ENCODE measurements at regions of chr1 and their contacts with region 1.

Region 1: DNA sequence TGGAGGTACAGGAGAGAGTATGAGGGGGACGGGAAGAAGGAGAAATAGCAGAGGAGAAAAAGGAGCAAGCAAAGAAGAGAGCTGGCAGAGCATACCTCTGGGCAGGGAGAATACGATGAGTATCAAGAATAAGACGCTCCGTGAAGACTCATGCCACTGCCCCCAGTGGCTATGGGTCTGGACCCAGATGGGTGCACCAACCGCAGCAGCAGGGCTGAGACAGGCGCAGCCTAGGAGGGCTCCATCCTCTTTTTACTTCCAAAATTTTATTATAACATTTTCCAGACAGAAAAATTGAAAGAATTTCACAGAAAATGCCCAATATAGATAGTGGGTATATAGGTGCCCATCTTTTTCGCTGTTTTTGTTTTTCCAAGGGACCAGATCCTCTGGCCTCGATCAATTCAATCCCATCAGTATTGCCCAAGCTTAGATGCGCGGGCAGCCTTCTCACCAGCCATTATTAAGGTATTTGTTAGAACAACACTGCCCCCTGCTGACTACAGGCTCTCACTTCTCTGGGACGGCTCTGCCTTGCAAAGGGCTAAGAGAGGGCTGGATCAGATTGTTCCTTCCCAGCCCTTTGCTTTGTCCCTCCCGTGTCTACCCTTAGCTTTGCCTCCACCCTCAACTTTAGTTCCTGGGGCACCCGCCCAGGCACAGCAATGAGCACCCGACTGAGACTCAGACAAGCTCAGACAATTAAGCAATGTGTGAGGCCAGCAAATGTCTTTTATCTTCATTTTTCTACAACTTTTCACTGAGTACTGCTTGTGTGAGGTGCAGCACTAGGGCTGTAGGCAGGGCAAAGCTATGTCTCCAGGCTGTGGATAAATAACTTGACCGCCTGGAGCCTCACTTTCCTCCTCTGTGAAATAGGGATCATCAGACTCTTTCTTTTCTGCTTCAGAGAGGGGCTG is 17.5 kb upstream of the CAMK1G start:
- DNase-seq: peak; percentile 77
- H3K4me3 ChIP-seq: no peak overlapping the region
- H3K27ac ChIP-seq: peak overlapping the region; percentile 18
- H3K4me1 ChIP-seq: peaks cover 38% of the 10 kb centered on the region
- H3K27me3 ChIP-seq: no peaks in the 10 kb centered on the region
- CTCF ChIP-seq: peak; percentile 78 to 87

Region 2: DNA sequence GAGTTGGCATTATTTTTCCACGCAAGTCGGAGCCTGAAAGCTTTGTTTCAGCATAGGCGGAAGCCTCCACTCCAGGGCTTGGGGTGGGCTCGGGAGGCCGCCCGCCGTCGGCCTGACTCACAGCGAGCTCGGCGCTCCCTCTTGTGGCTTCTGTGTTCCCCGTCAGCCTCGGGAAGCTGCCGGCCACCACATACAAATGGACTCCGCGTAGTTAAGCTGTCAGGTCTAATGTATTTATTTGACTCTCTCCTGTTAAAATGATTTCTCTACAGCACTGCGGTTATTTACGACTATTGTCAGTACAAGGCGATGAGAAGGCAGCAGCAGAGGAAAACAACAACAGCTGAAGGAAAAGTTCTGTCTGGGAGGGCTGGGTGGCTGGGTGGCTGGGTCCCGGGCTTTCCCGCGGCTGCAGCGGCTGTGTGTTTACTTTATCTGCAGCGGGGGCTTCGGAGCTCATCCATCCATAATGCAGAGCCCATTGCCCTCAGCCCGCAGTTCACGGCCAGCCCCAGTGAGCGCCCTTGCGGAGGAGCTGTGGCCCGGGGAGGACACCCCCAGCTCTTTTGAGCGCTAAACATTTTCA is 358.2 kb before region 1 on chr1:
- CTCF ChIA-PET with region 1: no interaction called
- dilution Hi-C with region 1: no loop called
- in situ Hi-C with region 1: no loop called
- intact Hi-C with region 1: loop called (anchors 2 kb)
- DNase-seq: peak; percentile 44
- H3K4me3 ChIP-seq: peak overlapping the region; percentile 28 to 46 (median 36)
- H3K27ac ChIP-seq: no peak overlapping the region
- H3K4me1 ChIP-seq: peaks cover 12% of the 10 kb centered on the region
- H3K27me3 ChIP-seq: no peaks in the 10 kb centered on the region
- CTCF ChIP-seq: peak; percentile 59 to 92

Region 3: GRCh38 chr1:209389258-209389657 is 176.8 kb before region 1 on chr1:
- CTCF ChIA-PET with region 1: no interaction called
- dilution Hi-C with region 1: no loop called
- in situ Hi-C with region 1: no loop called
- intact Hi-C with region 1: loop called (anchors 2 kb)
- DNase-seq: peak; percentile 98
- H3K4me3 ChIP-seq: no peak overlapping the region
- H3K27ac ChIP-seq: peak overlapping the region; percentile 98
- H3K4me1 ChIP-seq: peaks cover 64% of the 10 kb centered on the region
- H3K27me3 ChIP-seq: no peaks in the 10 kb centered on the region
- CTCF ChIP-seq: no peak

Region 4: DNA sequence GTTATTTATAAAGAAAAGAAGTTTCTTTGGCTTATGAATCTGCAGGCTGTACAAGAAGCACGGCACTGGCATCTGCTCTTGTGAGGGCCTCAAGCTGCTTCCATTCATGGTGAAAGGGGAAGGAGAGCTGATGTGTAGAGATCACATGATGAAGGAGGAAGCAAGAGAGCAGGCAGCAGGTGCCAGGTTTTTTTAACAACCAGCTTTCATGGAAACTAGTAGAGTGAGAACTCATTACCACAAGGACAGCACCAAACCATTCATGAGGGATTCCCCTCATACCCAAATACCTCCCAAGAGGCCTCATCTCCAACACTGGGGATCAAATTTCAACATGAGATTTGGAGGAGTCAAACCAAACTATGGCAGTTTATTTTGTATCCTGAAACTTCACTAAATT is 68.3 kb before region 1 on chr1:
- CTCF ChIA-PET with region 1: no interaction called
- dilution Hi-C with region 1: no loop called
- in situ Hi-C with region 1: no loop called
- intact Hi-C with region 1: no loop called
- DNase-seq: peak; percentile 25
- H3K4me3 ChIP-seq: no peak overlapping the region
- H3K27ac ChIP-seq: no peak overlapping the region
- H3K4me1 ChIP-seq: no peaks in the 10 kb centered on the region
- H3K27me3 ChIP-seq: no peaks in the 10 kb centered on the region
- CTCF ChIP-seq: no peak

Region 5: DNA sequence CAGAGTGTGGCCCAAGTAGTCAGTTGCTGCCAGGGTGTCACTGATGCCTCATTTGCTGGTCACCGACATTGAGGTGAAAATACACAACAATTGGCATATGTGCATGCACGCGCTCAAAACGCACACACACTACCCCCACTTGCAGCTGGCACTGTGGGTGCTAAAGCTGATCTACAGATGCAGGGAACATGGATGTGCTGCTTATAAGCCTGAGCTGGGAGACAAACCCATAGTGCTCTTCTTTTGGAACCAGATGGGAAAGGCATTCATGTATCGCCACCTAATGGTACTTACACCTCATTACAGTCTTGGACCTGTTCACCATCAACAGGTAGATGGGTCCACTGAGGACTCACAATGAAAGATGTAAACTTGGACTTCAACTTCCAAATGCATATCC is 52.8 kb before region 1 on chr1:
- CTCF ChIA-PET with region 1: no interaction called
- dilution Hi-C with region 1: no loop called
- in situ Hi-C with region 1: no loop called
- intact Hi-C with region 1: loop called (anchors 2 kb)
- DNase-seq: peak; percentile 55
- H3K4me3 ChIP-seq: no peak overlapping the region
- H3K27ac ChIP-seq: no peak overlapping the region
- H3K4me1 ChIP-seq: no peaks in the 10 kb centered on the region
- H3K27me3 ChIP-seq: no peaks in the 10 kb centered on the region
- CTCF ChIP-seq: peak; percentile 80 to 85

Region 6: DNA sequence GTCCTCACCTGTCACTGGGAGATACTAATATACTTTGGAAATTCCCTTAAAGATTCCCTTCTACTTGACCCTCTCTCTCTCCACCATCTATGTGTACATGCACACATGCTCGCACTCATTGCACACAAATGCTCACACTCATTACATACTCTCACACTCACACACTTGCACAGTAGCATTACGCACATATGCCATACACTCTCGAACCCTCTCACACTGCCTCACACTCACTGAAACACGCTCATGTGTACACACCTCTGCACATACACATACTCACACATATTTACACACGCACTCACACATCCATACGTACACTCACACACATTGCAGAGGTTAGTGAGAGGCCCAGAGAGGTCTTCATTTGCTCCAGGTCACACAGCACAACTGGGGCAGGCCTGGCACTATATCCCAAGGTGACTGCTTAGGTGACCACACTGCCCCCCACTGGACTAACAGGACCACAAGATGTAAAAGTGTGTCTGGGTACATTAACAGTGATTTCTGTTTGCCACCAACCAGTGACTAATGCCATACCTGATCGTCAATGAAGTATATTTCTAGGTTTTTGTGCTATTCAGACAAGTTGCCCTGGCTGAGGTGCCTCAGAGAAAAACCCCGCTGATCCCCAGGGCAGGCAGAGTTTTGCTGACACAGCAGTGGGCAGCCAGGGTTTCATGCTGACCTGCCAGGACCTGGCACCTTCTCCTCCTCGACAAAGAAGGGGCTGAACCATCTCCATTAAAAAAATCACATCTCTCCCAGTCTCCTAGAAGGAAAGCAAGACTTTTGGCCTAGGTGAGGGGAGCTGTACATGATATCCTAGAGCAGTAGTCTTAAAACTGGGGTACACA is 11.0 kb before region 1 on chr1:
- CTCF ChIA-PET with region 1: no interaction called
- dilution Hi-C with region 1: no loop called
- in situ Hi-C with region 1: no loop called
- intact Hi-C with region 1: no loop called
- DNase-seq: no peak
- H3K4me3 ChIP-seq: no peak overlapping the region
- H3K27ac ChIP-seq: no peak overlapping the region
- H3K4me1 ChIP-seq: peaks cover 16% of the 10 kb centered on the region
- H3K27me3 ChIP-seq: no peaks in the 10 kb centered on the region
- CTCF ChIP-seq: peak in 1 of 2 donors; percentile 7

Region 7: GRCh38 chr1:209692745-209693504 is 126.9 kb after region 1 on chr1:
- CTCF ChIA-PET with region 1: interaction called, 4 read pairs
- dilution Hi-C with region 1: no loop called
- in situ Hi-C with region 1: no loop called
- intact Hi-C with region 1: loop called (anchors 1 kb)
- DNase-seq: peak; percentile 73
- H3K4me3 ChIP-seq: peak overlapping the region in 1 of 3 experiments; percentile 13
- H3K27ac ChIP-seq: peak overlapping the region; percentile 85
- H3K4me1 ChIP-seq: peaks cover 41% of the 10 kb centered on the region
- H3K27me3 ChIP-seq: no peaks in the 10 kb centered on the region
- CTCF ChIP-seq: peak; percentile 80 to 83

Region 8: GRCh38 chr1:209747580-209748262 is 181.7 kb after region 1 on chr1:
- CTCF ChIA-PET with region 1: no interaction called
- dilution Hi-C with region 1: no loop called
- in situ Hi-C with region 1: loop called in 1 of 2 experiments (anchors 10 kb)
- intact Hi-C with region 1: loop called (anchors 1 kb)
- DNase-seq: peak; percentile 97
- H3K4me3 ChIP-seq: no peak overlapping the region
- H3K27ac ChIP-seq: no peak overlapping the region
- H3K4me1 ChIP-seq: peaks cover 7% of the 10 kb centered on the region
- H3K27me3 ChIP-seq: no peaks in the 10 kb centered on the region
- CTCF ChIP-seq: peak; percentile 69 to 74